CD14-positive monocyte (primary cell): ENCODE measurements at regions of chr22 and their contacts with region 1.

Region 1: GRCh38 chr22:46122511-46122971 is 27.8 kb upstream of the PPARA start:
- DNase-seq: peak; percentile 52 to 73 (median 66)
- H3K4me3 ChIP-seq: no peak overlapping the region
- H3K4me3 Mint-ChIP-seq: no peak overlapping the region
- H3K27ac ChIP-seq: no peak overlapping the region
- H3K27ac Mint-ChIP-seq: no peak overlapping the region
- H3K4me1 ChIP-seq: peaks cover 4 to 18% of the 10 kb centered on the region in 2 donors
- H3K4me1 Mint-ChIP-seq: no peaks in the 10 kb centered on the region
- H3K27me3 ChIP-seq: no peaks in the 10 kb centered on the region
- H3K27me3 Mint-ChIP-seq: peaks cover 4 to 10% (median 9%) of the 10 kb centered on the region in 3 donors
- CTCF ChIP-seq: peak; percentile 98

Region 2: GRCh38 chr22:46052801-46053562 is 69.6 kb before region 1 on chr22:
- intact Hi-C with region 1: no loop called
- DNase-seq: peak; percentile 37 to 81 (median 61)
- H3K4me3 ChIP-seq: peak overlapping the region; percentile 68 to 88 (median 76)
- H3K4me3 Mint-ChIP-seq: peak overlapping the region; percentile 89 to 96
- H3K27ac ChIP-seq: peak overlapping the region; percentile 83 to 87
- H3K27ac Mint-ChIP-seq: peak overlapping the region; percentile 90 to 96 (median 95)
- H3K4me1 ChIP-seq: peaks cover 79 to 90% of the 10 kb centered on the region in 2 donors
- H3K4me1 Mint-ChIP-seq: peaks cover 84% of the 10 kb centered on the region
- H3K27me3 ChIP-seq: no peaks in the 10 kb centered on the region
- H3K27me3 Mint-ChIP-seq: no peaks in the 10 kb centered on the region
- CTCF ChIP-seq: no peak

Region 3: DNA sequence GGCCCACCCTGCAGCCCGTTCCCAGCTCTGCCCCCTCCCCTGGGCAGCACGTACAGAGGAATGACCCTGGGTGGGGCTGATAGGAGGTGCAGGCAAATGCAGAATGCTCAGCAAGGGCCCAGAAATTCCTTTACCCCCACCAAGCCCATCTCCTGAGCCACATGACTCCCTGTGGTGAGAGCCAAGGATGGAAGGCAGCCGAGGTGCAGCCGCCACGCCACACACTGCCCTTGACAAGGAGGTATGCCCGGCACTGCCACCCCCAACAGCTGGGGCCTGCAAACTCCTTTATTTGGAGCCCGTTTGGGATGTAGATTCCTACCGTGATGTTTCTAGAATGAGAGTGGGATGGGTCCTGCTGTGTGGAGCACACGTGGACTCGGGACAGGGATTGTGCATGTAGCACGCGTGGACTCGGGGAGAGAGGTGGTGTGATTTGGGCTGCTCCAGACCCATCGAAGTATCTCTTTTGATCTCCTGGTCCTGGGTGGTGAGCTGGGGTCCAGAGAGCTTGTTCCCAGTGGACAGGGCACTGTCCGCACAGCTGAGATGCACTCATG is 187.1 kb after region 1 on chr22:
- intact Hi-C with region 1: loop called in 1 of 2 experiments (anchors 5 kb)
- DNase-seq: no peak
- H3K4me3 ChIP-seq: no peak overlapping the region
- H3K4me3 Mint-ChIP-seq: no peak overlapping the region
- H3K27ac ChIP-seq: no peak overlapping the region
- H3K27ac Mint-ChIP-seq: peak overlapping the region in 2 of 7 donors; percentile 53 to 69
- H3K4me1 ChIP-seq: no peaks in the 10 kb centered on the region
- H3K4me1 Mint-ChIP-seq: no peaks in the 10 kb centered on the region
- H3K27me3 ChIP-seq: no peaks in the 10 kb centered on the region
- H3K27me3 Mint-ChIP-seq: no peaks in the 10 kb centered on the region
- CTCF ChIP-seq: no peak

Region 4: DNA sequence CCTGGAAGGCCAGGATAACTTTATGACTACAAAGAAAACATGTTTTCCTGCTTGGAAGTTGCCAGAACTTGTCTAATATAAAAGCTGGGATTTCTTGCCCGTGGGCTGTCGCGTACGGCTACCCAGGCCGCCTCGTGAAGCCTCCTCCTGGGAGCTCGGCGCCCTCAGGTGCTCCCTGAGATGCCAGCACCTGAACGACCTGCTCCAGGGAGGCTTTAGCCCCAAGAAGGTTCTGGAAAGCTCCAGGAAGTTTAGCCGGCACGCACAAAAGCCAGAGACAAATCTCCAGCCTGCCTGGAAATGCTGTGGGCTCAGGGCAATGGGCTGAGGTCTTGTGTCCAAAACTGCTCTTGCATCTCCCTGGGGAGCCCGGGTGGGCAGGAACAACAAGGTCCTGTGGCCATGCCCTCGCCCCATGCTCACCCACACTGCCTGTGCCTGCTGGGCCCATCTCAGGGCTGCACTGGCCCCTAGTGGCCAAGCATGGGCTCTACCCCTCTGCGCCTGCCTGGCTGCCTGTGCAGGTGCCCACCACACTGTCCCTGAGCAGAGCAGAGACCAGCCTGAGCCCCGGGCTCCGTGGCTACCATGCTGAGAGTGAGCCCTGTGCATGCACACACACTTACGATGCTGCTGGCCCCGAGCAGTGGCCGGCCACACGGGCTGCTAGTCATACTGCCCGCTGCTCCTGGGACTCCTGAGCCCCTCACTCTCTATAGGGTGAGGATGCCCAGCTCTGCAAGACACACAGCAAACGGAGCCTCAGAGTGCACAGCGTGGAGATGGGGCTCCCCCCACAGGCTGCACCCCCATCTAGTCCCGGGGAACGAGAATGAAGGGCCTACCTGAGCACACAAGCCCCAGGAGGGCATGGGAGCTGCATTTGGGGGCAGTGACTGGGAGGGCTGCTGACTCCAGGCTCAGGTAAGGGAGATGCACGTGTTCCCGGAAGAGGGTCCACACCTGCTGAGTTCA is 419.8 kb after region 1 on chr22:
- intact Hi-C with region 1: loop called (anchors 5 to 10 kb)
- DNase-seq: peak; percentile 52 to 70 (median 69)
- H3K4me3 ChIP-seq: no peak overlapping the region
- H3K4me3 Mint-ChIP-seq: no peak overlapping the region
- H3K27ac ChIP-seq: no peak overlapping the region
- H3K27ac Mint-ChIP-seq: no peak overlapping the region
- H3K4me1 ChIP-seq: peaks cover 10 to 16% of the 10 kb centered on the region in 2 donors
- H3K4me1 Mint-ChIP-seq: peaks cover 24% of the 10 kb centered on the region
- H3K27me3 ChIP-seq: peaks cover 19 to 32% of the 10 kb centered on the region in 2 donors
- H3K27me3 Mint-ChIP-seq: peaks cover 33 to 47% (median 42%) of the 10 kb centered on the region in 3 donors
- CTCF ChIP-seq: peak; percentile 99